HEK293T (cell line): ENCODE measurements at regions of chr20 and their contacts with region 1.

Region 1: DNA sequence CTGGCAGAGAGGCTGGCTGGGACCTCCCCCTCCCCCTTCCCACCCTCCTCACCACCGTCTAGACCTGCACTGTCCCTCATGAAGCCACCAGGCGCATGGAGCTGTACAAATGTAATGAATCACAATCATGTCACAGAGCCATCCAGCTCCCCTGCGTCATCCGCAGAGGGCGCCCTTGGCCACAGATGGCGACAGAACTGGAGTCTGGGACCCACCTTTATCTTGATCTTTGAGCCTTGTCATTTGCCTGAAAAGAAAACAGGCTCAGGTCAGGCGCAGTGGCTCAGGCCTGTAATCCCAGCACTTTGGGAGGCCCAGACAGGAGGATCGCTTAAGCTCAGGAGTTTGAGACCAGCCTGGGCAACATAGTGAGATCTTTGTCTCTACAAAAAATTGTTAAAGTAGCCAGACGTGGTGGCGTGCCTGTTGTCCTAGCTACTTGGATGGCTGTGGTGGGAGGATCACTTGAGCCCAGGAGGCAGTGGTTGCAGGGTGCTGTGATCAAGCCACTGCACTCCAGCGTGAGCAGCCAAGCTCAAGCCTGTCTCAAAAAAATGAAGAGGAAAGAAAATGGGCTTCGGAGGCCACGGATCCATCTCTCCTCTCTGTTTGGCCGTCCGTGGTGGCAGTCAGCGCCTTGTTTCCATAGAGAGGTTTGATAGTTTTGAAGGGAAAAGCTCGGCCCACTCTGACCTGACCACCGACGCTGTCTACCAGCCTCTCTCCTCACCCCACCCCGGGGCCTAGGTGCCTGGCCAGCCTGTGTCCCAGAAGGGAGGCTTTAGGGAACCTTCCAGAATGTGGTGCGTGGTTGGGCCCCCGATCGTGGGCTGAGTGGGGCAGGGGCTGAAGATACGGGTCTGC is 6.2 kb downstream of the COL9A3 start:
- DNase-seq: peak; percentile 82

Region 2: DNA sequence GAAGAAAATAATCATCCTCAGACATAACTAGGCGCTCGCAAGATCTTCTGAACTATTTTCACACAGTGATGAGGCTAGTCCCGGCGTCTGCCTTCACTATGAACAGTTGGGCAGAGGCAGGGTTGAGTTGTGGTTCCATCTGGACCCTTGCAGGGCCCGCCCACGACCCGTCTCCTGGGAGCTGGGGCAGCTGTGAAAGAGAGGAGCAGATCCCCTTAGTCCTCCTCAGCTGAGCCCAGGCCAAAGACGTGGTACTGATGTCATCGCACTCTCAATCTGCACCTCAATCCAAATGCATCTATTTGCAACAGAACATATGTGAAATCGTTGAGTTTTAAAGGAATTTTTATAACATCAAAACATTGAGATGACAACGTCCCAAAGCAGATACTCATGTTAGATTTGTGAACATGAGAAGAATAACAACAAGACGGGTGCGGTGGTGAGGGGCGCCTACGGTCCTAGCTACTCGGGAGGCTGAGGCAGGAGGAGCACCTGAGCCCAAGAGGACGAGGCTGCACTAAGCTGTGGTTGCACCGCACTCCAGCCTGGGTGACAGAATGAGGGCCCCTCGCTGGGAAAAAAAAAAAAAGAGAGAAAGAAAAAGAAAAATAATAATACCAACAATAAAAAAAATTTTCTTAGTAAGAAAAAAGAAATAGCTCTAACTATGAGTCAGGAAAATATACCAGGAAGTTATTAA is 23.3 kb after region 1 on chr20:
- CTCF ChIA-PET with region 1: interaction called, 14 read pairs
- POLR2A ChIA-PET with region 1: interaction called, 3 read pairs
- DNase-seq: no peak

Region 3: DNA sequence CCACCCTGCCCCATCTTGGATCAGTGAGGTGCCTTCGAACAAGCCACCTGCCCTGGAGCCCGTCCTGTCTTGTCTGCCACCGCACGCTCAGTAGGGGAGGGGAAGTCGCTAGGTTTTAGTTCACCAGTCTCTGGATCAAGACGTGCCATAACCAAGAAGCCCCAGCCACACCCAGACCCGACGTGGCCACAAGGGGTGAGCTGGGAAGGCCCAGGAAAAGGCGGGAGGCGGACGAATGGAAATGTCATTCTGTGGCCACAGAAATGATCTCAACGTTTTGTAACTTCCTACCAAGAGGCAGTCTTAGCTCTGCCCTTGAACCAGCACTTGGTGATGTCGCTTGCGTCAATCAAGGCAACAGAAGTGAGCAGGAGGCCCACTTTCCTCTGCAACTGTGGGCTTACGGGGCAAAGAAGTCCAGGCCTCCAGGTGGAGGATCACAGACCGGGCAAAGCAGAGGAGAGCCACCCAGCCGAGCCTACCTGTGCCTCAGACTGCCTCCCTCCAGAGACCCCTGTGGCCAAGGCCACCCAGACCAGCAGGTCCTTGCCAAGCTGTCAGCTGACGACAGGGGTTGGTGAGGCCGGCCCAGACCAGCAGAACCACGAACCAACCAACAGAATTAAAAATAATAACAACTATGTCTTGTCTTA is 789.4 kb after region 1 on chr20:
- CTCF ChIA-PET with region 1: no interaction called
- POLR2A ChIA-PET with region 1: no interaction called
- DNase-seq: no peak